Spleen (tissue), 13 donors: ENCODE measurements at regions of chr3 and their contacts with region 1.

Region 1: DNA sequence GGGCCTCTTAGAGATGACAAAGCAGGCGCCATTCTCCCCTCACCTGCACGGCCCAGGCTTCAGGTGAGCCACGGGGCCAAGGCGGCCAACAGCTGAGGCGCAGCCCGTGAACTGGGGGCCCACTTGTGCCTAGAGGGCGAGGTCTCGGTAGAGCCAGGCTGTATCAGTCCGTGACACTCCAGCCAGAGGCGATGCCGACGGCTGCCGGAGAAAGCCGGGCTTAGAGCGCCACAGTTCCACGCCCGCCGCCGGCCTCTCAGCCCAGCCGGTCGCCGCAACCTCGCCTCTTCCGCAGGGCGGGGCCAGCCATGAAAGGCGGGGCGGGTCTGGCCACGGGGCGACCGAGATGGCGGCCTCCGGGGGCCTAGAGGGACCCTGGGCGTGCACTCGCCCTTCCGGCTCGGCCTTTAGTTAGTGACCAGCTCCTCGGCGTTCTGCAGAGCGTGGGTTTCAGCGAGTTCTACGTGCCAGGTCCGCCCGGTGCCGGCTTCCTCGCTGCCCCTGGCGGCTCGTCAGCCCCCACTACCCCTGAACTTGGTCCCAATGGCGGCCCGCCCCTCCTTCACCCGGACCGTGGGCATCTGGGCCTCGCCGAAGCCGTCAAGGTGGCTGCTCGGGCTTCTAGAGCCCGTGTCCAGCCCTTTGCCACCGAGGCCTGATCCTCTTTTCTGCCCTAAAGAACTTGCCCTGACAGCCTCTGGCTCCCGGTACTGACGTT is at the start of gene ZNF621:
- DNase-seq: peak; percentile 99
- H3K4me3 ChIP-seq: peak within 1 kb of the TSS; percentile 64 to 94 (median 73)
- H3K27ac ChIP-seq: peak within 1 kb of the TSS; percentile 84 to 95 (median 90)
- H3K4me1 ChIP-seq: peaks cover 0 to 46% (median 19%) of the 10 kb centered on the region in 6 donors
- H3K27me3 ChIP-seq: no peaks in the 10 kb centered on the region
- CTCF ChIP-seq: peak in 1 of 11 experiments; percentile 17
- POLR2A ChIP-seq: peak in 2 of 3 donors; percentile 40 to 82
- total RNA-seq, gene ZNF621: 18.0 to 28.0 (median 21.6) TPM

Region 2: DNA sequence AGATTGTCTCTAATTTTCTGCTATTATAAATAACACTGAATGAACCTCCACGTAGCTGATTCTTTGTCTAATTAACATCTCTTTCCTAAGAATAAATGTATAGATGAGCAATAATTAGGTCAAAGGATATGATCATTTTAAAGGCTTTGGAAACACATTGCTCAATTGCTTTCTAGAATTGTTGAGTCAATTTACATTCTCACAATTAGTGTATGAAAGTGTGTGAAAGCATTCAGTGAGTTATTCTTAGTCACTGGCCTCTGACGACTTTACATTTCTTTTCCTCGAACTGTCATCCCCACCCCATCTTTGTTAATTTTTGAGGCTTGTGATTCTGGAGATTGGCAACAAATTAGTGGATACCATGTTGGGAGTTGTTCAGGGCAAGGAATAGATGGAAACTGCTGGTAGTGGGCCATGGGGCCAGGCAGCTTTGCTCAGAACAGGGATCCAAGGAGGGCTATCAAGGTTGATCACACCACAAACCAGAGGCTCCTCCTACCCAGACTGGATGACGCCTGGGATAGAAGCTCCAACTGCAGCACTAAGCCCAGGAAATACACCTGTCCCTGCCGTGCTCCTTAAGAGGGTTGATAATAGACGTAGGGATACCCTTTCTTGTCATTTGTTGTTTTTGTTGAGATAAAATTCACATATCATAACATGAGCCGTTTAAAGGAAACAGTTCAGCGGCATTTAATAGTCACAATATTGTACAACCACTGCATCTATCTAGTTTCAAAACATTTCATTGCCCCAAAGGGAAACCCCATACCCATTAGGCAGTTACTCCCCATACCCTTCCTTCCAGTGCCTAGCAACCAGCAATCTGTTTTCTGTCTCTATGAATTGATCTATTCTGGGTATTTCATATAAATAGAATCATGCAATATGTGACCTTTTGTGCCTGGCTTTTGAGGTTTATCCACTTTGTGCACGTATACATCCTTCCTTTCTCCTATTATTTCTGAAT is 187.3 kb before region 1 on chr3:
- intact Hi-C with region 1: no loop called
- DNase-seq: no peak
- H3K4me3 ChIP-seq: no peak overlapping the region
- H3K27ac ChIP-seq: no peak overlapping the region
- H3K4me1 ChIP-seq: no peaks in the 10 kb centered on the region
- H3K27me3 ChIP-seq: no peaks in the 10 kb centered on the region
- CTCF ChIP-seq: no peak
- POLR2A ChIP-seq: no peak

Region 3: DNA sequence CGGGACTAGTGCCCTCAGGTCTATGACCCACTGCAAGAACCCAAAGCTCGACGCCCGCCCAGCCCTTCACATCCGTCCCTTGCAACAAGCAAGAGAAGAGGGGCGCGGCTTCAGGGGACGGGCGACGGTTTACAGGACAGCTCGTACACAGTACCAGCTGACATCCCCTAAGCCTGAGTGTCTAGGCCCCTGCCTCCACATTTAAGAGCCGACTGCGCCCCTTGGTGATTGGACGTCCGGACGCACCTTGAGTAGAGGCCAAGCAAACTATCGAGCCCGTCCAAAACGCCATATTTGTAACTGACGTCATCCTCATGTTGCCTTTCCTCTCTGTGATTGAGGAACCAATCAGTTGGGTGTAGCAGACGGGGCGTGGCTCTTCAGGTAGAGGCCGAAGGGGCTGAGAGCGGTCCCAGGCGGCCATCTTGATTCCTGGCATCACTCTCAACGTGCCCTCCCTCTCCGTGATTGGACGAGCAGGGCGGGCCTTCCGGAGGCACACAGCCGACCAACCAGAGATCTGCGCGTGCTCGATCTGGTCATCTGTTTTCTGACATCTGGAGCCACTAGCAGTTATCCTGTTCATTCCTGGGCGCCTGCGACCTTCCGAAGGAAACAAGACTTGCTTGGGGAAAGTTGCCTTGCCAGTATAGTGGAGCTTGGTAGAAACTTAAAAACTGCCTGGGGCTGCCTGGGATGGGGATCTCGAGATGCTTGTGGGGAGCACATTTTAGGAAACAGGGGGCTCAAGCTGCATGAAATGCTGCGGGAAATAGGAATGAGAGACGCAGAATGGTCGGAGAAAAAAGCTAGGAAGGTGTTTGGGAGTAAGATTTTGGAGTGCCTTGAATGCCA is 71.6 kb before region 1 on chr3:
- intact Hi-C with region 1: loop called (anchors 10 kb)
- DNase-seq: peak; percentile 100
- H3K4me3 ChIP-seq: peak overlapping the region; percentile 36 to 76 (median 58)
- H3K27ac ChIP-seq: peak overlapping the region; percentile 88 to 97 (median 96)
- H3K4me1 ChIP-seq: peaks cover 14 to 44% (median 30%) of the 10 kb centered on the region in 6 donors
- H3K27me3 ChIP-seq: no peaks in the 10 kb centered on the region
- CTCF ChIP-seq: no peak
- POLR2A ChIP-seq: peak in 1 of 3 donors; percentile 42